ENCODE measurements at regions of chr1 and their contacts with region 1.

Region 1: DNA sequence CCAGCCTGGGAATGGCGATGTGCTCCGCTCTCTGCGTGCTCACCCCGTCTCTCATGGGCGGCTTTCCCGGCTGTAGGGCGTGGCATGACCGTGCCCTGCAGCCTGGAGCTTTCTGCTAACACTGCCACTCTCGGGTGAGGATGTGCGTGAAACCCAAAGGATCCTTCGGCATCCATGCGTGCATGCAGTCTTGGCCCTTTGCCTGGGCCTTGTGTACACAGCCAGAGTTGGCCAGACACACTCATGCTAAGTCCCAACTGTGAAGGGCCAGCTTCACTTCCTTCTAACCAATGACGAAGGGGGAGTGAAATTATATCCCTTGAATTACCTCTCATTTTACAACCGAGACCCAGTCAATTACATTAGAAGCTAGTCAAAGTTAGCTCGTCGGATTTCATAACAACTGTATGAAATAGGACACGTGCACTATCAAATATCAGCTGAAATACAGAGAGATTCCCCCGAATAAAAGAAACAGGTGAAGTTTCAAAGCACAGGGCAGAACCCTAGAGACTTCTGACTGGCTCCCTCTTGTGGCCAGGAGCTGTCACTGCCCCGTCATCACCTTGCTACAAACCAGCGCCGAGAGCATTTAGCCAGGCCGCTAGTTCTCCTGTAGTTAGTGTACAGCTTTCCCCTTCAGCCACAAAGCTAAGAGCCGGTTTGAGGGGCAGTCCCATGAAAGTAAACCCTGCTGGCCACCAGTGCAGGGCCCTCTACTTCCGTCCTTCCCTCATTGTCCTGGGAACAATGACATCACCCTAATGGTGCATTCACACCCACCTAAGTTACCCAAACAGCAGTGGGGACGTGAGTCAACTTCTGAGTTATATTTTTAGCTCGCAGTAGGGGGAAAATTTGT is 63.4 kb upstream of the COA6 start:
- DNase-seq: peak; percentile 59
- H3K4me3 ChIP-seq: no peak overlapping the region
- H3K27ac ChIP-seq: no peak overlapping the region
- H3K4me1 ChIP-seq: peaks cover 22% of the 10 kb centered on the region
- H3K27me3 ChIP-seq: no peaks in the 10 kb centered on the region
- CTCF ChIP-seq: peak; percentile 90 to 97

Region 2: GRCh38 chr1:234125283-234125682 is 184.5 kb before region 1 on chr1:
- CTCF ChIA-PET with region 1: interaction called, 5 read pairs
- dilution Hi-C with region 1: no loop called
- in situ Hi-C with region 1: no loop called
- intact Hi-C with region 1: loop called (anchors 1 kb)
- DNase-seq: peak; percentile 55
- H3K4me3 ChIP-seq: no peak overlapping the region
- H3K27ac ChIP-seq: no peak overlapping the region
- H3K4me1 ChIP-seq: peaks cover 7% of the 10 kb centered on the region
- H3K27me3 ChIP-seq: no peaks in the 10 kb centered on the region
- CTCF ChIP-seq: peak; percentile 66 to 79

Region 3: DNA sequence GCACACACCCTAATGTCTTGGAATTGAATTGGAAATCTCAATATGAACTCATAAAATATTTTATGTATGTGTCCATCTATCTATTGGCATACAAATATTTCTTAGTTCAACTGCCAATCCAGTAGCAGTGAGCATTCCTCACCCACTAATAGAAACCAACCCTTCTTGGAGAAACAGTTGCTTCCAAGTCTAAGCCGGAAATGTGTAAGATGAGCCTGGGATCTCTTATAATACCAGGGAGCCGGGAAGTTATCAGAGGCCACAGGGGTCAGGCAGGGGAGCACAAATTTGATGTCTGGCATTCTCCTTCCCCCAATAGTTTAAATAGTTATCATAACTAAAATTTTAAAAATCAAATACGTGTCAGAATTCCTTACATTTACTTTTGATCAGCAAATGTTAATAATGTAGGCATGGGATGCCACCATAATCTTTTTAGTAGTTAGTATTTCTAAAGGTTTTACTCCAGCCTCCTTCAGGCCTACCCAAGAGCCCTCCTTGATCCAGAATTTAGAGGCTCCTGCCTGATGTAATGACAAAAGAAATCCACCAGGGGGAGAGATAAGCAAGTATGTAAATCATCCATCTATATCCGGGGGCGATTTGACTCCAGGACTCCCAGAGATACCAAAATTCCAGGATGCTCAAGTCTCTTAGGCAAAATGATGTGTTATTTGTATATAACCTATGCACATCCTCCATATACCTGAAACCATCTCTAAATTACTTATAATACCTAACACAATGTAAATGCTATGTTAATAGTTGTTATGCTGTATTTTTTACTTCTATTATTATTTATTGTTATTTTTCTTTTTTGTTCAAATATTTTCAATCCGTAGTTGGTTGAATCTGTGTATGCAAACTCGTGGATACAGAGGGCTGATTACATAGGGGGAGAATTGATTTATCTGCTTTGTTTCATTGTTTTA is 155.2 kb before region 1 on chr1:
- CTCF ChIA-PET with region 1: no interaction called
- dilution Hi-C with region 1: loop called (anchors 10 kb)
- in situ Hi-C with region 1: loop called (anchors 5 to 10 kb)
- intact Hi-C with region 1: loop called (anchors 1 kb)
- DNase-seq: peak; percentile 73
- H3K4me3 ChIP-seq: no peak overlapping the region
- H3K27ac ChIP-seq: no peak overlapping the region
- H3K4me1 ChIP-seq: peaks cover 3% of the 10 kb centered on the region
- H3K27me3 ChIP-seq: no peaks in the 10 kb centered on the region
- CTCF ChIP-seq: peak; percentile 73 to 80

Region 4: GRCh38 chr1:234212764-234213657 is 96.8 kb before region 1 on chr1:
- CTCF ChIA-PET with region 1: interaction called, 11 read pairs
- dilution Hi-C with region 1: no loop called
- in situ Hi-C with region 1: no loop called
- intact Hi-C with region 1: loop called (anchors 1 kb)
- DNase-seq: peak; percentile 53
- H3K4me3 ChIP-seq: no peak overlapping the region
- H3K27ac ChIP-seq: no peak overlapping the region
- H3K4me1 ChIP-seq: peaks cover 48% of the 10 kb centered on the region
- H3K27me3 ChIP-seq: no peaks in the 10 kb centered on the region
- CTCF ChIP-seq: peak; percentile 72 to 81

Region 5: DNA sequence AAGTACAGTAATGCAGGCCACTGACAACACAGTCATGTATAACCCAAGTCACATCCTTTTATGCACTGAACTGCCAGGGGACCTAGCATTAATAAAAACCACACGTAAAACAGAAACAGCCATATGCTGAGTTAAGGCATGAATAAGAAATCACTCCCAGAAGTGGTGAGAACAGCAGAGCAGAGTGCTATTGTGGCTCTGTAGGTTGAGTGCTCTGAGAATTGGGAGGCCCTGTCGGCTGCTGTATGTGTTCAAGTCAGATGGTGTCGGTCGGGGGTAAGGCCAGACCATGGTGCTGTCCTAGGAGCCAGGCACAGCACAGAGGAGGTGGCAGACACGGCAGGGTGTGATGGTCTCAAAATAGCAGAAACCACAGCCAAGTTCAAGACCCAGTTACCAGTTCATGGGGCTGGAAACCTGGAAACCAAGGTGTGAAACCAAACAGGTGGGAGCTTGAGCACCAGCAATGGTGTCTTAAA is 63.2 kb before region 1 on chr1:
- CTCF ChIA-PET with region 1: no interaction called
- dilution Hi-C with region 1: no loop called
- in situ Hi-C with region 1: no loop called
- intact Hi-C with region 1: no loop called
- DNase-seq: no peak
- H3K4me3 ChIP-seq: no peak overlapping the region
- H3K27ac ChIP-seq: no peak overlapping the region
- H3K4me1 ChIP-seq: peaks cover 2% of the 10 kb centered on the region
- H3K27me3 ChIP-seq: no peaks in the 10 kb centered on the region
- CTCF ChIP-seq: no peak

Region 6: DNA sequence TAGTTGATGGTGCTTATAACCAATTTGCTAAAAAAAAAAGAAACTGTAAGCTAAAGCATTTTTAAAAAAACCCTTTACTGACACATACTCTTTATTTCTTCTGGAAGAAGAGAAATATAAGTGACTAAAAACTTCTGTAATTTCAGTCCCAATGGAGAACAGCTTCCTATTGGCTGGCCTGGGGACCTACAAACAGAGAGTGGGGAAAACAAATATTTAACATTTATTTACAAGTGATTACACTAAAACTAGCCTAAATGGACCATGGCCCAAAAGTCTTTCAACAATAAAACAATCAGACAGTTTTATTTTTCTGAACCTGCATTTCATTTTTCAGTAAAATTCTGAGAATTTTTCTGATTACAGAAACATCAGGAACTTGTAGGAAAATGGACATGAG is 153.9 kb after region 1 on chr1:
- CTCF ChIA-PET with region 1: no interaction called
- dilution Hi-C with region 1: no loop called
- in situ Hi-C with region 1: no loop called
- intact Hi-C with region 1: no loop called
- DNase-seq: no peak
- H3K4me3 ChIP-seq: no peak overlapping the region
- H3K27ac ChIP-seq: no peak overlapping the region
- H3K4me1 ChIP-seq: no peaks in the 10 kb centered on the region
- H3K27me3 ChIP-seq: no peaks in the 10 kb centered on the region
- CTCF ChIP-seq: no peak

Measured in mammary epithelial cell (primary cell).